Gastrocnemius medialis (tissue), 4 donors: ENCODE measurements at regions of chr15 and their contacts with region 1.

Region 1: DNA sequence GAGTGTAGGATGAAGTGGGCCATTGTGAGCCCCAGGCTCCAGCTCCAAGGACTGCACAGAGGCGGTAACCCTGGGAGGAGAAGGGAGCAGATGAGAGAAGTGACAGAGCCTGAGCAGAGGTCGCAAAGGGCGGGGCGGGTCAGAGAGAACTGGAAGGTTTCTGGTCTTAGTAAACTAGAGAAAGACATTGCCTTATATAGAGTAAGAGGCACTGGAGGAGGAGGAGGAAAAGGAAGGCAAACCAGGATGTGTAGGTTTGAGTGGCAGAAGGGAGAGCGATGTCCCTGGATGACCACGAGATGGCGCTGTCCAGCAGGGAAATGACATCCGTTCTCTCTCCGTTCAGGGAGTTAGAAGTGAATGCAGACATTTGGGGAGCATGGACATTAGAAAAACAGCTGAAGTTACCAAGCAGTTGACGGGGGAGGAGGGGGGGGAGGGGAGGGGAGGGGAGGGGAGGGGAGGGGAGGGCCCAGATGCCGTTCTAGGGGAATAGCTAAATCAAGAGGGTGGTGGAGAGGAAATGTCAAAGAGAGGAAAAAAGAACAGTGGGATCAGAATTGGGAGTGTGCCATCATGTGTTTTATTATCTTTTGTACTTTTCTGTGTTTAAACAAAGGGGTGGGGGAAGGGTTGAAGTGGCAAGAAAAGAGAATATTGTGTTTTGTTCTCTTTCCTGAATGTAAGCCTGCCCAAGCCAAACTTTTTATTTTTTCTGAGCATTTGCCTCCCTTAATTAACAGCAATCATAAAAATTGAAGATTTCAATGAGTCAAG is 48.8 kb downstream of the STARD5 start:
- DNase-seq: peak; percentile 32 to 33
- ATAC-seq: peak; percentile 68 to 82
- H3K4me3 ChIP-seq: no peak overlapping the region
- H3K27ac ChIP-seq: no peak overlapping the region
- H3K4me1 ChIP-seq: no peaks in the 10 kb centered on the region
- H3K27me3 ChIP-seq: no peaks in the 10 kb centered on the region
- CTCF ChIP-seq: peak; percentile 58 to 80 (median 76)
- POLR2A ChIP-seq: no peak

Region 2: GRCh38 chr15:81336568-81336967 is 61.4 kb after region 1 on chr15:
- in situ Hi-C with region 1: loop called in 1 of 4 experiments (anchors 10 kb)
- intact Hi-C with region 1: loop called (anchors 5 kb)
- DNase-seq: no peak
- ATAC-seq: no peak
- H3K4me3 ChIP-seq: no peak overlapping the region
- H3K27ac ChIP-seq: no peak overlapping the region
- H3K4me1 ChIP-seq: peaks cover 0 to 6% of the 10 kb centered on the region in 2 donors
- H3K27me3 ChIP-seq: no peaks in the 10 kb centered on the region
- CTCF ChIP-seq: no peak
- POLR2A ChIP-seq: no peak

Region 3: GRCh38 chr15:81400640-81401236 is 125.6 kb after region 1 on chr15:
- in situ Hi-C with region 1: loop called in 3 of 4 experiments (anchors 5 kb)
- intact Hi-C with region 1: loop called (anchors 1 kb)
- DNase-seq: no peak
- ATAC-seq: no peak
- H3K4me3 ChIP-seq: no peak overlapping the region
- H3K27ac ChIP-seq: no peak overlapping the region
- H3K4me1 ChIP-seq: no peaks in the 10 kb centered on the region
- H3K27me3 ChIP-seq: no peaks in the 10 kb centered on the region
- CTCF ChIP-seq: peak; percentile 31 to 62 (median 44)
- POLR2A ChIP-seq: no peak

Region 4: DNA sequence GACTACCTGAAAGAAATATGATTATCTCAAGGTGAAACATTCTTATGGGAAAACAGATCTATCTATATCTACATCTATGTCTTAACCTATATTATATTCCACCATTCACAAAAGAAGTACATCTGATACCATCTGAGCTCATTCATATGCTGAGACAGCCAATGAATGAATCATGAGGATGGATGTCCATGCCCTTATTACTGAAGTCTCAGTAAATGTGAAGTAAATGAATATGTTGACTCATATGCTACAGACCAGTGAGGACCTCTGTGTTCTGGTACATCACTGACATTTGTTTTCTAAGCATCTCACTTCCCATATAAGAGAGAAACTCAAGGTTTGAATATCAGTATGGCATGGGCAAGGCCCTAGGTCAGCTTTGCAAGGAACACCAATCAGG is 410.1 kb after region 1 on chr15:
- in situ Hi-C with region 1: no loop called
- intact Hi-C with region 1: no loop called
- DNase-seq: no peak
- ATAC-seq: no peak
- H3K4me3 ChIP-seq: no peak overlapping the region
- H3K27ac ChIP-seq: no peak overlapping the region
- H3K4me1 ChIP-seq: no peaks in the 10 kb centered on the region
- H3K27me3 ChIP-seq: no peaks in the 10 kb centered on the region
- CTCF ChIP-seq: no peak
- POLR2A ChIP-seq: no peak